ENCODE measurements at regions of chr15 and their contacts with region 1.

Region 1: DNA sequence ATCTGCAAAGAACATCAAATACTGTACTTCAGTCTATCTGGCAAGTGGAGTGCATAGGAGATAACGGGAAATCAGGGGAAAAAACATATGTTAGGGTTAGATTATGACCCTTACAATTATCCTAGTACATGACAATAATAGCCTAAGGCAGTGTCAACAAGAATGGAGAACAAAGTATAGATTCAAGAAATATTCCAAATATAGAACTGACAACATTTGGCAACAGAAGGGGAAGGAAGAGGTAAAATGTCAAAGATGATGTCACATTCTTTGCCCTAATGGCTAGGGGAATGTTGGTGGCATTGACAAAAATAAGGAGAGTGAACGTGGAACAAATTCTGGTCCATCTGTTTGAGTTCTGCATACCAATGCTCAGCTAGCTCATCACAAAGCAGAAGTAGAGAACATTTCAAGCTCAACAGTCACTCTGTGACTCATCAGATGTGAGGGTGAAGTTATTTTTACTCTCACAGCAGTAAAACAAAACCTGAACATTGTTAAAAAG is 15.5 kb upstream of the ATP8B4 start:
- DNase-seq: no peak
- H3K4me3 Mint-ChIP-seq: no peak overlapping the region
- H3K27ac Mint-ChIP-seq: peak overlapping the region; percentile 84
- H3K4me1 Mint-ChIP-seq: peaks cover 52% of the 10 kb centered on the region
- H3K27me3 Mint-ChIP-seq: peaks cover 14% of the 10 kb centered on the region

Region 2: DNA sequence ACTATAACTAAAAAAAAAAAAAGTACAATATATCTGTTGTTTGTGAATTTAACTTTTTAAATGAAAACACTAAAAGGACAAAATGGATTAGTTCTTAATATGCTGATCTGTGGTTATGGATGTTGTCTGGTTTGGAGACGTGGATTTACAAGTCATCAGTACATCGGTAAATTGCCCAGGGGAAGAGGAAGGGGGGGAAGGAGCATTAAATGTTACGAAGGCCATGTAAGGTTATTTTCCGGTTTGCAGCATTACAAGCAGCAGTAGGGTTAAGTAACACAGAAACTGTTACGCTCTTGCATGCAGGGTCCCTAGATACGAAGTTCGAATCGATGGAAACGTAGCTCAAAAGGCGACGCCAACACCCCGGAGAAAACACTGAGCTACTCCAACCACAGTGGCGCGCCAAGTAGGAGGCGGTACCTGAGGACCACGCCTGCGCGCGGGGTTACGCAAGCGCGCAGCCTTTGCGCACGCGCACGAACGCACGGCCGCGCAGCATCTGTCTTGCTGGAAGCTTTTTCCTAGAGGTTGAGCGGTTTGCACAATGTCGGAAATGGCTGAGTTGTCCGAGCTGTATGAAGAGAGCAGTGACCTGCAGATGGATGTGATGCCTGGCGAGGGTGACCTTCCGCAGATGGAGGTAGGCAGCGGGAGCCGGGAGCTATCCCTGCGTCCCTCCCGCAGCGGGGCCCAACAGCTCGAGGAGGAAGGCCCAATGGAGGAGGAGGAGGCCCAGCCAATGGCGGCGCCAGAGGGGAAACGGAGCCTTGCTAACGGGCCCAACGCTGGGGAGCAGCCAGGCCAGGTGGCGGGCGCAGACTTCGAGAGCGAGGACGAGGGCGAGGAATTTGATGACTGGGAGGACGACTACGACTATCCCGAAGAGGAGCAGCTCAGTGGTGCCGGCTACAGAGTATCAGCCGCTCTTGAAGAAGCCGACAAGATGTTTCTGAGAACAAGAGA is 1256.7 kb before region 1 on chr15 and contains the start of gene EID1:
- CTCF ChIA-PET with region 1: no interaction called
- POLR2A ChIA-PET with region 1: no interaction called
- intact Hi-C with region 1: loop called (anchors 5 kb)
- DNase-seq: peak; percentile 96
- H3K4me3 Mint-ChIP-seq: peak within 1 kb of the TSS; percentile 99
- H3K27ac Mint-ChIP-seq: peak within 1 kb of the TSS; percentile 96
- H3K4me1 Mint-ChIP-seq: peaks cover 44% of the 10 kb centered on the region
- H3K27me3 Mint-ChIP-seq: peaks cover 12% of the 10 kb centered on the region
- total RNA-seq, gene EID1: 88.3 to 90.0 TPM

Region 3: DNA sequence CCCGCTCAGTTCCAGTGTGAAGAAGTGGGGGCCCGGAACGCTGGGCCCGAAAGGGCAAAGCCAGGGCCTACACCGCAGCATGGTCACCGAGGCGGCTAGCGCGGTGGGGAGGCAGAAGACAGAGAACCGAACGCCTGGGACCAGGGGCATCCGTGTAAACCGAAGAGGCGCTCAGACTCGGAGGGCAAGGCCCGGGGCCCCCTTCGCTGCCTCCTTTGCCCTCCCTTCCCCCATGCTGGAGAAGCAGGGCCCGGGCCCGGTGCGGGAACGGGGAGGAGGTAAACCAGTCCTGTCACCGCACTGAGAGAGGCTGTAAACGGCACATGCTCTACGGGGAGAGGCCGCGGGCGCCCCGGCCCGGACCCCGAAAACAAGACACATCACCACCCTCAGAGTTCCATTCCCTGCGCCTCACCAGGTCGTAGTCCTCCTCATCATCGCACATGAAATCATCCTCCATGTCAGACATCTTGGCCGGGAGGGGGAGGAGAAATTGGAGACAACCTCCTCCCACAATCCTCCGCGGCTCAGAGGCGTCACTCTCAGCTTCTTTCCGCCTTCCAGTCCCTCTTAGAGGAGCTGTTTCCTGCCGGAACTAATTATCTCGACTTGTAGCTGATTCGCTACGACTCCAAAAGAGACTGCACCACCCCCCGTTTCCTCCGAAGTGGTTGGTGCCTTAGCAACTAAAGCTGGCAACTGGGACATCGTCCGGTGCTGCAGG is 979.3 kb before region 1 on chr15 and contains the start of gene COPS2:
- CTCF ChIA-PET with region 1: no interaction called
- POLR2A ChIA-PET with region 1: interaction called, 3 read pairs
- intact Hi-C with region 1: loop called (anchors 10 kb)
- DNase-seq: peak; percentile 97
- H3K4me3 Mint-ChIP-seq: peak within 1 kb of the TSS; percentile 99
- H3K27ac Mint-ChIP-seq: peak within 1 kb of the TSS; percentile 97
- H3K4me1 Mint-ChIP-seq: peaks cover 50% of the 10 kb centered on the region
- H3K27me3 Mint-ChIP-seq: no peaks in the 10 kb centered on the region
- total RNA-seq, gene COPS2: 79.8 to 80.0 TPM

Region 4: DNA sequence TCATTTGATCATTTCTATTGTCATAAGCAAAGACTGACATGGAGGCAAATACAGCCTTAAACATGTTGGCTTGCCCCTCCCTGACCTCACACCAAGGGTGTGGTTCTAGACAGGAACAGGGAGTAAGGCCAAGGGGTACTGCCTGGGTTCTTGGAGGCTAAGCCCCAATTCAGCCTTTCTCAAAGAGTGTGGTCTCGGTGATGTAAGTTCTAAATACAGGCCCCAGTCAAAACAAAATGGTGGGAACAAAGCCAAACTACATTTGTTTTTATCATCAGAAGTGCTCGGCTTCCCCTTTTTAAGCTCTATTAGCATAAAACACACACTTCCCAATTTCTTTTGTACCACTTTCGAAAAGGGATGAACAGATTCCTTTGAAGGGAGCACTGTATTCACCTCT is 145.1 kb before region 1 on chr15:
- CTCF ChIA-PET with region 1: no interaction called
- POLR2A ChIA-PET with region 1: no interaction called
- intact Hi-C with region 1: no loop called
- DNase-seq: no peak
- H3K4me3 Mint-ChIP-seq: no peak overlapping the region
- H3K27ac Mint-ChIP-seq: no peak overlapping the region
- H3K4me1 Mint-ChIP-seq: no peaks in the 10 kb centered on the region
- H3K27me3 Mint-ChIP-seq: no peaks in the 10 kb centered on the region

Region 5: GRCh38 chr15:50095938-50096821 is 38.4 kb before region 1 on chr15:
- CTCF ChIA-PET with region 1: no interaction called
- POLR2A ChIA-PET with region 1: no interaction called
- intact Hi-C with region 1: no loop called
- DNase-seq: no peak
- H3K4me3 Mint-ChIP-seq: no peak overlapping the region
- H3K27ac Mint-ChIP-seq: no peak overlapping the region
- H3K4me1 Mint-ChIP-seq: no peaks in the 10 kb centered on the region
- H3K27me3 Mint-ChIP-seq: peaks cover 2% of the 10 kb centered on the region

Region 6: GRCh38 chr15:50107591-50108408 is 26.8 kb before region 1 on chr15:
- CTCF ChIA-PET with region 1: interaction called, 3 read pairs
- POLR2A ChIA-PET with region 1: no interaction called
- intact Hi-C with region 1: loop called (anchors 1 kb)
- DNase-seq: peak; percentile 65
- H3K4me3 Mint-ChIP-seq: no peak overlapping the region
- H3K27ac Mint-ChIP-seq: peak overlapping the region; percentile 30
- H3K4me1 Mint-ChIP-seq: peaks cover 23% of the 10 kb centered on the region
- H3K27me3 Mint-ChIP-seq: peaks cover 2% of the 10 kb centered on the region

Region 7: GRCh38 chr15:50176869-50177268 is 42.3 kb after region 1 on chr15:
- CTCF ChIA-PET with region 1: interaction called, 4 read pairs
- POLR2A ChIA-PET with region 1: no interaction called
- intact Hi-C with region 1: loop called (anchors 1 kb)
- DNase-seq: no peak
- H3K4me3 Mint-ChIP-seq: no peak overlapping the region
- H3K27ac Mint-ChIP-seq: no peak overlapping the region
- H3K4me1 Mint-ChIP-seq: peaks cover 26% of the 10 kb centered on the region
- H3K27me3 Mint-ChIP-seq: peaks cover 22% of the 10 kb centered on the region

Region 8: DNA sequence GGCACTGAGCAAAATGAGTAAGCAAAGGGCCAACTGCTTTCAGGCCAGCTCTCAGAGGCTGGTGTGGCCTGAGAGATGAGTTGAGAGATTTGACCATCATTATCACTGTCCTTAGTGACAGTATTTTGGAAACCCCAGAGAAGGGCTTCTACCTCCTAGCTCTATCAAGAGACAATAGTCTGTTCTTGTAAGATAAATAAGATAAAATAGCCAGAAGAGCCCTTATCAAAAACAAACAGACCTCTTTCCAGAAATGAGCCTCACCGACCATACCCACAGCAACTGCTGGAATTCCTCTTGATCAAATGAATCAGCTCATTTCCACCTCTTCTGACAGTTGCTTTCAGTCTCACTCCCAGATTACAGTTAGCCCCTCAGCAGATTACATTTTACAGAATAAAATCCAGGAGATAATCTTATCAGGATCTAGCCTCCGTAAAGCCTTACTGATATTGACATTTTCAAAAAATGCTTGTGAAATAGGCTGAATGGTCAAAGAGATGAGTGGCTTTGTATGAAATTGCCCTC is 126.5 kb after region 1 on chr15:
- CTCF ChIA-PET with region 1: no interaction called
- POLR2A ChIA-PET with region 1: interaction called, 21 read pairs
- intact Hi-C with region 1: loop called (anchors 1 kb)
- DNase-seq: peak; percentile 41
- H3K4me3 Mint-ChIP-seq: peak overlapping the region; percentile 53
- H3K27ac Mint-ChIP-seq: peak overlapping the region; percentile 99
- H3K4me1 Mint-ChIP-seq: peaks cover 68% of the 10 kb centered on the region
- H3K27me3 Mint-ChIP-seq: no peaks in the 10 kb centered on the region

Region 9: DNA sequence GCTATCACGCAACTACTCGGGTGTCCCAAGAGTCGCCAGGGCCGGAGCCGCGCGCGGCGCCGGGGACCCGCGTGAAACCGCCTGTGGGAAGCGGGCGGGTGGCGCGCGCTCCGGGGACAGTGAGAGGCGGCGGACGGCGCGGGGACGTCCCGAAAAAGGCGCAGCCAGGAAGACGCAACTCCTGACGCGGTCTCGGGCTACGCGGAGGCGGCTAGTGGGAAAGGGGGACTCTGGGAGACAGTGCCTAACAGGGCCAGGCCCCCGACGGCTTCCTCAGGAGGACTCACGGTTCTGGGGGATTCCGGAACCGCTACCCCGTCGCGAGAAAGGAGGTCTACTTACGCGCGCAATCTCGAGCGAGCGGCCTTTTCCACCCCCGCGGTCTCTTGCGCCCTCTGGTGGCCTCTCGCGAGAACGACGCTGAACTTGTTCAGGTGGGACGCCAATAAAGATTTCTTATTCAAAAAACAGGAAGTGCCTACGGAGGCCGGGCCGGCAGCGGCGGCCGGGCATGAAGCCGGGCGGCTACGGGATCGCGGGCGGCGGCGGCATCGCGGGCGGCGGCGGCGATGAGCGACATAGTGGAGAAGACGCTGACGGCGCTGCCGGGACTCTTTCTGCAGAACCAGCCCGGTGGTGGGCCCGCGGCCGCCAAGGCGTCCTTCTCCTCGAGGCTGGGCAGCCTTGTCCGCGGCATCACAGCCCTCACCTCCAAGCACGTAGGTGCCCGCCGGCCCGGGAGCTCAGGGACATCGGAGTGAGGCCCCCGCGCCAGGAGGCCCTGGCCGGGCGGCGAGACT is 773.8 kb after region 1 on chr15 and contains the start of gene AP4E1:
- CTCF ChIA-PET with region 1: no interaction called
- POLR2A ChIA-PET with region 1: no interaction called
- intact Hi-C with region 1: loop called (anchors 1 kb)
- DNase-seq: peak; percentile 96
- H3K4me3 Mint-ChIP-seq: peak within 1 kb of the TSS; percentile 93
- H3K27ac Mint-ChIP-seq: peak within 1 kb of the TSS; percentile 98
- H3K4me1 Mint-ChIP-seq: peaks cover 22% of the 10 kb centered on the region
- H3K27me3 Mint-ChIP-seq: no peaks in the 10 kb centered on the region
- total RNA-seq, gene AP4E1: 12.0 to 12.7 TPM